ENCODE measurements at regions of chr11 and their contacts with region 1.

Region 1: GRCh38 chr11:102451681-102452460 is 694 bp downstream of the TMEM123 start:
- DNase-seq: peak; percentile 75
- H3K4me3 Mint-ChIP-seq: peak overlapping the region; percentile 89
- H3K27ac Mint-ChIP-seq: peak overlapping the region; percentile 89
- H3K4me1 Mint-ChIP-seq: peaks cover 73% of the 10 kb centered on the region
- H3K27me3 Mint-ChIP-seq: no peaks in the 10 kb centered on the region

Region 2: DNA sequence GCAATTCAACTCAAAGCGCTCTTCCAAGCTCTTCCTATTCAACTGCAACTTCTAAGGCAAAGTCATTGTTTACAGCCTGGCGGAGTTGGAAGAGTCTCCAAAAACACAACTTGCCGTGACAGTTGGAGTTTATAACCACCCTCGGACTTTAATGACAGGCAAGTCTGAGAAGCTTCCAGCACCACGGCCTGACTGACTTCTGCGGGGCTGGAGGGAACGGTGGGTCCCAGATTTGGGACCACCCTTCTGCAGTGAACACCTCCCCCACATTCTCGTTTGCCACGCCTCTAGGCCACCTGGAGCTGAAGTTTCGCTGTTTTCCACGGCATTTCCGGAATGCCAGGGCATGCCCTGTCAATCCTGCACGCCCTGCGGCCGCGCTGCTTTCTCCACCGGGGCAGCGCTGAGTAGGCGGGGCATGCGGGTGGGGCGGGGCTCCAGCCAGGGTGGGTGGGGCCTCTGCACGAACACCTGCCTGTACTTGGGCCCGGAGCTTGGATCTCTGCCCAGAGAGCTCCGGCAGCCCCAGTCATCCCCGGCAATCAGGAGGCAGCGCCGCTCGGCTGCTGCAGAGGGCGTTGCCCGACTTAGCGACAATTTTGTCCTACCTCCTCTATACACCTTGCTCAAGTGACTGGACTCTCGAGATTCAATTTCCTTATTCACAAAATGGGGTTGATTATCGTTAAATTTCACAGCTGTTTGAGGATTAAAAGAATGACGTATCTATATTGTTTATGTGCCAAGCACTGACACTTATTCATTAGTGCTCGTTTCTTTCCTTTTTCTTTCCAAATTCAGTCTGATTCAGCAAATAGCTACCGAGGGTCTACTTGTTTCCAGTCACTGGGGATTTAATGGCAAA is 183.3 kb before region 1 on chr11:
- intact Hi-C with region 1: no loop called
- DNase-seq: peak; percentile 61
- H3K4me3 Mint-ChIP-seq: peak overlapping the region; percentile 46
- H3K27ac Mint-ChIP-seq: no peak overlapping the region
- H3K4me1 Mint-ChIP-seq: peaks cover 25% of the 10 kb centered on the region
- H3K27me3 Mint-ChIP-seq: peaks cover 49% of the 10 kb centered on the region

Region 3: GRCh38 chr11:102346748-102347461 is 105.0 kb before region 1 on chr11 and contains the start of gene BIRC2:
- intact Hi-C with region 1: loop called (anchors 1 kb)
- DNase-seq: peak; percentile 92
- H3K4me3 Mint-ChIP-seq: peak within 1 kb of the TSS; percentile 98
- H3K27ac Mint-ChIP-seq: peak within 1 kb of the TSS; percentile 98
- H3K4me1 Mint-ChIP-seq: peaks cover 29% of the 10 kb centered on the region
- H3K27me3 Mint-ChIP-seq: no peaks in the 10 kb centered on the region
- total RNA-seq, gene BIRC2: 28.0 and 30.4 TPM in 2 replicates

Region 4: GRCh38 chr11:102360681-102361080 is 91.2 kb before region 1 on chr11:
- intact Hi-C with region 1: no loop called
- DNase-seq: no peak
- H3K4me3 Mint-ChIP-seq: no peak overlapping the region
- H3K27ac Mint-ChIP-seq: no peak overlapping the region
- H3K4me1 Mint-ChIP-seq: peaks cover 41% of the 10 kb centered on the region
- H3K27me3 Mint-ChIP-seq: no peaks in the 10 kb centered on the region

Region 5: GRCh38 chr11:102416976-102417375 is 34.9 kb before region 1 on chr11:
- intact Hi-C with region 1: loop called (anchors 1 kb)
- DNase-seq: no peak
- H3K4me3 Mint-ChIP-seq: no peak overlapping the region
- H3K27ac Mint-ChIP-seq: peak overlapping the region; percentile 26
- H3K4me1 Mint-ChIP-seq: peaks cover 72% of the 10 kb centered on the region
- H3K27me3 Mint-ChIP-seq: no peaks in the 10 kb centered on the region

Region 6: GRCh38 chr11:102476812-102477211 is 24.9 kb after region 1 on chr11:
- intact Hi-C with region 1: loop called (anchors 2 kb)
- DNase-seq: no peak
- H3K4me3 Mint-ChIP-seq: peak overlapping the region; percentile 19
- H3K27ac Mint-ChIP-seq: peak overlapping the region; percentile 88
- H3K4me1 Mint-ChIP-seq: peaks cover 55% of the 10 kb centered on the region
- H3K27me3 Mint-ChIP-seq: no peaks in the 10 kb centered on the region

Region 7: DNA sequence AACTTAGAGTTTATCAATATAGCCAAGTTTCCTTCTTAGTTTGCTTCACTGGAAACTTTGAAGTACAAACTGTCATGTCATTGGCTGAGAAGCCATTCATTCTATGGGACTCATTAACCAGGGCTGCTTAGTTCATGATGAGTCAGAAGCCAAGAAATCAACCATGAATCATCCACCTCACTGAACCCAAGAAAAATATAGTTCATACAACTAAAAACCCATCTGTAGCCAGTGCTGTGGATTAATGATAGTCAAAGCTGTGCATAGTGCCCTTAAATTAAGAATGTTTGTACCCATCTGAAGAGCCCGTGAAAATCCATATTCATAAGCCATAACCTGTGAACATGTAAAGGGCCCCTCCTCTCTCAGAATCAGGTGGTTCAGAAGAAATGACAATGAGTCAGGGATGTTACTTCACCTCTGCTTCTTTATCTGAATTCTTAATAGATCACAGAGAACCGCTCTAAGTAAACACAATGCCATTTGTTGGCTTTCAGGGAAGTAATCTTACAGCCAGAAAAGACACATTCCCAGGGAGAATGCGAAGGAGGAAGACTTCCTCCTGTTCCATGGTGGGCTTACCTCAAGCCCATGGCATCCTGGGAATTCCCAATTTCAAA is 147.9 kb after region 1 on chr11:
- intact Hi-C with region 1: loop called (anchors 5 kb)
- DNase-seq: no peak
- H3K4me3 Mint-ChIP-seq: no peak overlapping the region
- H3K27ac Mint-ChIP-seq: peak overlapping the region; percentile 37
- H3K4me1 Mint-ChIP-seq: peaks cover 36% of the 10 kb centered on the region
- H3K27me3 Mint-ChIP-seq: no peaks in the 10 kb centered on the region

Measured in activated T-helper 2 cell treated with anti-CD3 and anti-CD28 coated beads, Interferon-gamma antibody, Interleukin-2, Interleukin-4, amounts not matched to agents 10 μg/mL and 5 μg/mL and 100 μg/mL, durations not matched to agents 14 hours and 24 hours and 36 hours (primary cell).